ENCODE measurements at regions of chr1 and their contacts with region 1.

Region 1: DNA sequence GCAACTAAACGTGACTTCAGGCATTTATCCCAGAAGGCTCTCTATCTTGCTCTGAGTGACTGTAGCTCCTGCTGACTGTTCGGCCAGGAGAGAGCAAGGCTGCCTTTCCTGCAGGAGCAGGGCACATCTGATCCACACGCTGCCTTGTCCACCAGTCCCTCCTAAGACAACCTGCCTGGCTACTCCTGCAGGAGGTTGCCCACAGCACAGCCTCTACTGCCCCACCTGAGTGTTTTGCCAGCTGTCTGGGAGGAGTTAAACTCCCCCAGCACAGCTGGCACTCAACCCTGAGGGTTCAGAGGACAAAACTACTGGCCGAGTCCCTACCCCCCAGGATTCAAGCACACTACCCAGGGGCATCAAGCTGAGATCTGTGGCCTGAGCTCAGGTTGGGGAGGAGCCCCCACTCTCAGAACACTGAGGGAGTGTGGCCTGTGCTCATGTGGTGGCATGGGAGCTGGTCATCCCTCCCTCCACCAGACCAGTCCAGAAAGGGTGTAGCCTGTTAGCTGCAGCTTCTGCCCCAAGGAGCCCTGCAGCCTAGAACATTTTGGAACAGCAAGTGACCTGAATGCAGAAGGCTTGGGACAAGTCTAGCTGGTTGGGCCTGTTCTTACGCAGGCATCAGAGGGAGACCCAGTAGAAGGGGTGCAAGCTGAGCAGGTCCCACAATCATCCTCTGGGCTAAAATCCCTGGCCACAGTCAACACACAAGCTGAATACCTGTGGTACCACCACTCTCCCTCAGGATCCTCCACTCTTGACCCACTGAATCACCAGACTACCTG is 237.2 kb downstream of the SLC44A5 start:
- DNase-seq: no peak
- ATAC-seq: peak in 2 of 4 donors; percentile 29 to 44
- H3K4me3 ChIP-seq: peak overlapping the region; percentile 57
- H3K27ac ChIP-seq: peak overlapping the region; percentile 15
- H3K4me1 ChIP-seq: peaks cover 5% of the 10 kb centered on the region
- H3K27me3 ChIP-seq: no peaks in the 10 kb centered on the region
- CTCF ChIP-seq: no peak

Region 2: GRCh38 chr1:75265792-75266191 is 107.9 kb before region 1 on chr1:
- intact Hi-C with region 1: loop called (anchors 10 kb)
- DNase-seq: no peak
- ATAC-seq: peak in 2 of 4 donors; percentile 44 to 63
- H3K4me3 ChIP-seq: no peak overlapping the region
- H3K27ac ChIP-seq: no peak overlapping the region
- H3K4me1 ChIP-seq: no peaks in the 10 kb centered on the region
- H3K27me3 ChIP-seq: no peaks in the 10 kb centered on the region
- CTCF ChIP-seq: peak; percentile 63

Region 3: GRCh38 chr1:75273110-75273509 is 100.6 kb before region 1 on chr1:
- intact Hi-C with region 1: loop called (anchors 10 kb)
- DNase-seq: no peak
- ATAC-seq: no peak
- H3K4me3 ChIP-seq: no peak overlapping the region
- H3K27ac ChIP-seq: no peak overlapping the region
- H3K4me1 ChIP-seq: no peaks in the 10 kb centered on the region
- H3K27me3 ChIP-seq: no peaks in the 10 kb centered on the region
- CTCF ChIP-seq: no peak

Region 4: DNA sequence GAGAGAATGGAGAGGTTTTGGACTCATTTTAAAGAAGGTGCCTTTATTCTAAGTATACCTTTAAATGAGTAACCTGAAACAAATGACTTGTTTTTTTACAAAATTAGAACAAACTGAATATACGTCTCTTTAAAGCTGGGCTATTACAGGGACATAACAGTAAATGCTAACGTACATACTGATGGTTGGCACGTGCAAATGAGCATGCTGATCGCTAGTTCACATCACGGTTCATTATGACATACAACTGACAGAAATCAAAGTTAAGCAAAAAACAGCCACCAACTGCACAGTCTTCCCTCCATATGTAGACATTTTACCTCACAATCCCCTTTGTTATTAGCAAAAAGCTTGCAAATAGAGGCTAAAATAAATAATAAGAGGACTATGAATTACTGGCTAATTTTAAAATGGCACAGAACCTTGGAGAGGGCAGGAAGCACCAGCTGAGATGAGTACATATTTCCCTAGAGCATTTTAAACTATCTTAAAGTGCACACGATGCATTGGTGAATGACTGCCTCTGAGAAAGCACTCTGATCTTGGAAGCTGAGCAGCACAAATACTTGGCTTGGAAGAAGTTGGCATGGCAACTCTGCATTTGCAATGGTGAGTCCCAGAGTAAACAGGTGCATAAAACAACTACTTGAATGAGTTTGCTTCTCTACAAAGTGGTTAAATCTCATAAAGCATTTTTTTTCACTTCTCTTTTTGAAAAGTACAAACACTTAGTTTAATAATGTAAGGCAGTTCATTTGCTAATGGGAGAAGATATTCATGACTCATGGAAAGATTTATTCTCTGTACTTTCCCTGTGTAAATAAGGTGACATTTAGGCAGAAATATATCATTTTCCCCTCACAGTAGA is 34.9 kb before region 1 on chr1:
- intact Hi-C with region 1: loop called in 1 of 2 experiments (anchors 5 kb)
- DNase-seq: no peak
- ATAC-seq: peak in 3 of 4 donors; percentile 53 to 88 (median 66)
- H3K4me3 ChIP-seq: no peak overlapping the region
- H3K27ac ChIP-seq: peak overlapping the region; percentile 60
- H3K4me1 ChIP-seq: peaks cover 24% of the 10 kb centered on the region
- H3K27me3 ChIP-seq: no peaks in the 10 kb centered on the region
- CTCF ChIP-seq: no peak

Region 5: GRCh38 chr1:75400716-75401115 is 27.0 kb after region 1 on chr1:
- intact Hi-C with region 1: no loop called
- DNase-seq: no peak
- ATAC-seq: peak in 1 of 4 donors; percentile 49
- H3K4me3 ChIP-seq: no peak overlapping the region
- H3K27ac ChIP-seq: no peak overlapping the region
- H3K4me1 ChIP-seq: no peaks in the 10 kb centered on the region
- H3K27me3 ChIP-seq: no peaks in the 10 kb centered on the region
- CTCF ChIP-seq: no peak

Measured in psoas muscle (tissue), 8 donors.